ENCODE measurements at regions of chr11 and their contacts with region 1.

Region 1: GRCh38 chr11:57249384-57250319 is 12.6 kb upstream of the APLNR start:
- DNase-seq: peak in 1 of 2 experiments; percentile 87
- H3K4me3 ChIP-seq: no peak overlapping the region
- H3K27ac ChIP-seq: no peak overlapping the region
- H3K4me1 ChIP-seq: peaks cover 0 to 2% (median 0%) of the 10 kb centered on the region in 4 experiments; a peak in 1 of 7 replicates
- H3K27me3 ChIP-seq: no peaks in the 10 kb centered on the region
- CTCF ChIP-seq: peak; percentile 78 to 86 (median 84)
- EP300 ChIP-seq: no peak
- POLR2A ChIP-seq: no peak
- RAD21 ChIP-seq: peak; percentile 91 to 97

Region 2: DNA sequence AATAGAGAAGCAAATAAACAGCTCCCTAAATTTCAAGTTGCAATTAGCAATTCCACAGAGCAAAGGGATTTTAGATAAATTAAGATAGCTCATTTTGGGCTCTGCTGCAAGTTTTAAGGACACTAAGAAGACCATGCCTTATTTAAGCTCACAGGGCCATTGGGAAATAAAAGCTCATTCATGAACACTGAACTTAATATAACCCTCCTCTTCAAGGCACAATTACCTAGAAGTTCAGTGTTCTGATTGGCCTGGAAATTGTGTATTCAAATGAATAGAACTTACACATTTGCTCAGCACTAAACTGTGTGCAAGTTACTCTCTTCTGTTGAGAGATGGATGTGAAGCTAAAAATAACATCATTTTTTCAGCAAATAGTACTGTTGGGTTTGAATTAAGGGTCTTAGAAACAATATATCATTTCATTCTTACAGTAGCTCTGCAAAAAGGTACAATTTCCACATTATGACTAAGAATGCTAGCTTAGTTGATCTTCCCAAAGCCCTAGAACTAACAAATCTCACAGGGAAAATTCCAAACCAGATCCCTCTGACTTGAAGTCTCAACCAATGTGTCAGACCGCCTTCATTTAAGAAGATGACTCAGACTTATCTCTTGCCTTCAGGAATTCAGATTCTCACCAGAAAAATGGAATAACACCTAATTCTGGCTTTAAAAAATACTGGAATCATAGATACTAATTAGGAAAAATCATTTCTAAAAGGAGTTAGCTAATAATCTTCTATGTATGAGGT is 155.3 kb before region 1 on chr11:
- CTCF ChIA-PET with region 1: interaction called, 41 read pairs
- POLR2A ChIA-PET with region 1: no interaction called
- DNase-seq: no peak
- H3K4me3 ChIP-seq: no peak overlapping the region
- H3K27ac ChIP-seq: no peak overlapping the region
- H3K4me1 ChIP-seq: no peaks in the 10 kb centered on the region
- H3K27me3 ChIP-seq: no peaks in the 10 kb centered on the region
- CTCF ChIP-seq: no peak
- EP300 ChIP-seq: no peak
- POLR2A ChIP-seq: no peak
- RAD21 ChIP-seq: no peak

Region 3: GRCh38 chr11:57150454-57150917 is 99.2 kb before region 1 on chr11:
- CTCF ChIA-PET with region 1: interaction called, 46 read pairs
- POLR2A ChIA-PET with region 1: no interaction called
- DNase-seq: no peak
- H3K4me3 ChIP-seq: no peak overlapping the region
- H3K27ac ChIP-seq: no peak overlapping the region
- H3K4me1 ChIP-seq: peaks cover 0 to 6% (median 2%) of the 10 kb centered on the region in 4 experiments; a peak in 4 of 7 replicates
- H3K27me3 ChIP-seq: no peaks in the 10 kb centered on the region
- CTCF ChIP-seq: no peak
- EP300 ChIP-seq: no peak
- POLR2A ChIP-seq: no peak
- RAD21 ChIP-seq: no peak

Region 4: DNA sequence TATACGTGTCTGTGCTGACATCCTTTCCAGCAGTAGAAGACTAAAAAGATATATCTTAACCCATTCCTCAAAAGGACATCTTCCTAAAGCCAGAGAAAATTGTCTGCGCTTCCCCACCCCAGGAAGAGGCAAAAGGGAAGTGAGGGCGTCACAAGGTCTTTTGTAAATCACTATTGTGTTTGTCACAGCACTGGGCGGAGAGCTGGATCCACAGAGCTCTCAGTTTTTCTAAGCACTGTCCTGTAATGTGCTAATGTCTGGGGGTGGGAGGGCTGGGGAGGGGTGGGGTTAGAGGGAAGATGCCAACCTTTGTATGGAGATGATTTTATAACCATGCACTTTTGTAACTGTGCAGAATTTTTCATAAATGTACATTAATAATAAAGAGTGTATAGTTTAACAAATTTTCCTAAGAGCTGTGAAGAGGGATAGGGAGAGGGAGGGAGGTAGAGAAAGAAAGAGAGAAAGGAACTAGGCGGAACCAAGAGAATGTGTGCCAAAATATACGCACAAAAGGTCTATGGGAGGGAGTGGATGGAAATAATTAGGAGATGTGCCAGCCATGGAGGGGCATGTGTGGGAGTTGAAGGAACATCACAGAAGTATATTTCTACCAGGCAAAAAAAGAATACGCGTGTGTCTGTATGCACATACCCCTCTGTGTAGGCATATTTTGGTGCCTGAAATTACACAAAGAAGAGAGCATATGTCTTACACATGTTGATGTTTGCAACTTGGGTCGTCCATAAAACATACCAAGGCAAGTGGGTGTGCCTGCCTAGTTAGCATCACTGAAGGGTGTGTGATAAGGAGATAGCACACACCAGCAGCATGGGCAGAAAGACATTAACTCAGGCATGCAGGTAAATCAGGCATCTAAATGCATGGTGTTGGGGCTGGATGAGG is 58.1 kb before region 1 on chr11:
- CTCF ChIA-PET with region 1: interaction called, 20 read pairs
- POLR2A ChIA-PET with region 1: no interaction called
- DNase-seq: no peak
- H3K4me3 ChIP-seq: no peak overlapping the region
- H3K27ac ChIP-seq: no peak overlapping the region
- H3K4me1 ChIP-seq: peaks cover 0 to 5% (median 1%) of the 10 kb centered on the region in 4 experiments; a peak in 2 of 7 replicates
- H3K27me3 ChIP-seq: no peaks in the 10 kb centered on the region
- CTCF ChIP-seq: no peak
- EP300 ChIP-seq: no peak
- POLR2A ChIP-seq: no peak
- RAD21 ChIP-seq: no peak

Region 5: DNA sequence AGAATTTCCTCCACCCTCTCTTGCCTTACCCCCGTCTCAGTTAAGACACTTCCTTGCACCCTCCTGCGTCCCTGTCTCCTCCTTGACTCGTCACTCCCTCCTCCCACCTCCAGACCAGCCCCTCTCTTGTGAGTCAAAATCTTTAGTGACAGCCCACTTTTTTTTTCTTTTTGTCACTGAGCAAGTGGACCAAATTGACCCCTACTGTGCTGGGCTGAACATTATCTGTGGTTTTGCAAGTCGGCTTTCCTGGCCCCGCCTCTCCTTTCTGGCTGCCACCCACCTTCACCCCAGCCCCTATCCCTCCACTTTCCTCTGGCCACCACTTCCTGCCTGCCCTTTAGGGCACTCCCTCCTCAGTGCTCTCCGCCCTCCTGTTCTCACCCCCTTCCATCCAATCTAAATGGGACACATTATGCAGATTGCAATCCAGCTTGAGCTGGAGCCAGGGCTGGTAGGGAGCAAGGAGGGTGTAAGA is 12.4 kb before region 1 on chr11 and contains the start of gene APLNR:
- CTCF ChIA-PET with region 1: interaction called, 72 read pairs
- POLR2A ChIA-PET with region 1: no interaction called
- DNase-seq: no peak
- H3K4me3 ChIP-seq: no peak within 1 kb of the TSS
- H3K27ac ChIP-seq: no peak within 1 kb of the TSS
- H3K4me1 ChIP-seq: peaks cover 0 to 4% (median 1%) of the 10 kb centered on the region in 4 experiments; a peak in 4 of 7 replicates
- H3K27me3 ChIP-seq: no peaks in the 10 kb centered on the region; a peak in 2 of 7 replicates
- CTCF ChIP-seq: no peak
- EP300 ChIP-seq: no peak
- POLR2A ChIP-seq: no peak
- RAD21 ChIP-seq: no peak
- total RNA-seq, gene APLNR: 0.13 TPM in 1 of 2 replicates, not detected in the other

Region 6: DNA sequence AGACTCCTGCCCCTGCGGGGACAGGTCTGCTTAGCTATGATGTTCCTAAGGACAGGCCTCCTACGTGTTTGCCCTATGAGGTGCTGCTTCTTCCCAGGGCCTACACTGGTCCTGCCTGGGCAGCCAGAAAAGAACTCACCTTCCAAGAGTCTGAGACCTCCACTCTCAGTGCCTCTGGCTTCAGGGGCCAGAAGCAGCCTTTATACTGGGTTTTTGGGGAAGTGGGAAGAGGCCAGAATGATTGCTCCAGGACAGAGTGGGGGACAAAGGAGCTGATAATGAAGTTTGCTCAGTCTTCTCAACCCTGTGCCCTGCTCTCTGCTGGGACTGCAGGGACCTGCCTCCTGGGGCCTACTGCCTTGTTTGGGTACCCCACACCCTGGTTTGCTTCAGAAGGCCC is 131.3 kb after region 1 on chr11 and contains the start of gene PRG3:
- CTCF ChIA-PET with region 1: no interaction called
- POLR2A ChIA-PET with region 1: no interaction called
- DNase-seq: no peak
- H3K4me3 ChIP-seq: no peak within 1 kb of the TSS
- H3K27ac ChIP-seq: no peak within 1 kb of the TSS
- H3K4me1 ChIP-seq: no peaks in the 10 kb centered on the region
- H3K27me3 ChIP-seq: peaks cover 0 to 2% (median 0%) of the 10 kb centered on the region in 4 experiments; a peak in 1 of 7 replicates
- CTCF ChIP-seq: no peak
- EP300 ChIP-seq: no peak
- POLR2A ChIP-seq: no peak
- RAD21 ChIP-seq: no peak
- total RNA-seq, gene PRG3: not detected in 2 replicates

Measured in H1 (cell line).